Activated CD4-positive, alpha-beta T cell treated with anti-CD3 and anti-CD28 coated beads for 36 hours (primary cell): ENCODE measurements at regions of chr7 and their contacts with region 1.

Region 1: GRCh38 chr7:140003913-140004382 is 58.8 kb downstream of the PARP12 start:
- DNase-seq: peak; percentile 53
- ATAC-seq: peak; percentile 16
- H3K4me3 Mint-ChIP-seq: no peak overlapping the region
- H3K27ac Mint-ChIP-seq: no peak overlapping the region
- H3K4me1 Mint-ChIP-seq: no peaks in the 10 kb centered on the region
- H3K27me3 Mint-ChIP-seq: no peaks in the 10 kb centered on the region

Region 2: DNA sequence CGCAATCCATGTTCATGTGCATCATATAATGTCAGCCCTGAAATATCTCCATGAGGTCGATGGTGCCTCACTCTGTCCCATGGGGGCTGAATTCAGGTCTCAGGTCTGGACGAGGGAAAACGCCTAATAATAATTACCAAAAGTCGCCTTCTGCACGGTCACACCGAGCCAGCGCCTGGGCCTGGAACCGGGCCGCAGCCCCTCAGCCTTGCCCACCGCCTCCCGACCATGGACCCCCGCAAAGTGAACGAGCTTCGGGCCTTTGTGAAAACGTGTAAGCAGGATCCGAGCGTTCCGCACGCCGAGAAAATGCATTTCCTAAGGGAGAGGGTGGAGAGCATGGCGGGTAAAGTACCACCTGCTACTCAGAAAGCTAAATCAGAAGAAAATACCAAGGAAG is 501.7 kb before region 1 on chr7:
- CTCF ChIA-PET with region 1: interaction called, 9 read pairs
- POLR2A ChIA-PET with region 1: no interaction called
- intact Hi-C with region 1: loop called (anchors 1 kb)
- DNase-seq: no peak
- ATAC-seq: no peak
- H3K4me3 Mint-ChIP-seq: no peak overlapping the region
- H3K27ac Mint-ChIP-seq: no peak overlapping the region
- H3K4me1 Mint-ChIP-seq: peaks cover 4% of the 10 kb centered on the region
- H3K27me3 Mint-ChIP-seq: peaks cover 2% of the 10 kb centered on the region